ENCODE measurements at regions of chr14 and their contacts with region 1.

Region 1: GRCh38 chr14:50607181-50607580 is 47.2 kb downstream of the ATL1 start:
- DNase-seq: no peak
- ATAC-seq: no peak
- H3K4me3 ChIP-seq: no peak overlapping the region
- H3K27ac ChIP-seq: no peak overlapping the region
- H3K4me1 ChIP-seq: peaks cover 0 to 8% (median 0%) of the 10 kb centered on the region in 9 donors
- H3K27me3 ChIP-seq: no peaks in the 10 kb centered on the region
- CTCF ChIP-seq: no peak

Region 2: GRCh38 chr14:50679674-50680073 is 72.5 kb after region 1 on chr14:
- intact Hi-C with region 1: loop called in 1 of 10 experiments (anchors 5 kb)
- DNase-seq: no peak
- ATAC-seq: no peak
- H3K4me3 ChIP-seq: no peak overlapping the region
- H3K27ac ChIP-seq: no peak overlapping the region
- H3K4me1 ChIP-seq: peaks cover 0 to 19% (median 16%) of the 10 kb centered on the region in 9 donors
- H3K27me3 ChIP-seq: no peaks in the 10 kb centered on the region
- CTCF ChIP-seq: no peak